Sigmoid colon (tissue), 7 donors: ENCODE measurements at regions of chr5 and their contacts with region 1.

Region 1: DNA sequence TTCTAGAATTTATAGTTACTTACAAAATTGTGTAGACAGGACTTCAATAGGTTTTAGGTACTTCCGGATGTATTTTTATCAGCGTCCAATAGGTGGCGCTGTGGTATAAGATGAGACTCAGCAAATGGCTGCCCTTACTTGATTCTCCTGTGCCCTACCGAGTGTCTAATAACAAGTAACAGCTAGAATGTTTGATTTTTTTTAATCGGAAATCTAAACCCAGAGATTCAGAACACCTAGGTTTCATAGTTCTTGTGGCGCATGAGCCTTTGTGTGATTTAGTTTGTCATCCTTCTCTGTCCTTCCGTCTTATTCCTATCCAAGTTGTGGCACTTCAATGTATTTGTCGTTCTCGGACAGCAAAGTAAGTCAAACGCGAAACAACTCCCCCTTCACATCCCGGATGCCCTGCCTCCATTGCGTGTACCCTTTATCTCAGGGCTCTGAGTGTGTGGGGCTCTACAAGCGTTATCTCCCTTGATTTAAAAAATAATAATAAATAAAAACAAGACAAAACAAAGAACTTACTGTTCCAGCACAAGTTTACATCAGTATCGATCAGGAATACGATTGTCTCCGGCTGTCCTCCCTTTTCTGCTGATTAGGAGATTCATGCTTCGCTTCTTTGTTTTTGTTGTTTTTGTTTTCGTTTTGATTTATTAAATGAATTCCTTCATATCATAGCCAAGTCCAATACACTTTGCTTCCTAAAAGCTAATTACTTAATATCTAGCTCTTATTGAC is 50.7 kb upstream of the SLC30A5 start:
- DNase-seq: peak; percentile 87
- H3K4me3 ChIP-seq: peak overlapping the region; percentile 28 to 52 (median 46)
- H3K27ac ChIP-seq: peak overlapping the region; percentile 59 to 78 (median 71)
- H3K4me1 ChIP-seq: peaks cover 0 to 8% (median 2%) of the 10 kb centered on the region in 4 donors
- H3K27me3 ChIP-seq: no peaks in the 10 kb centered on the region
- CTCF ChIP-seq: peak; percentile 57 to 85 (median 76)
- EP300 ChIP-seq: no peak
- POLR2A ChIP-seq: no peak

Region 2: DNA sequence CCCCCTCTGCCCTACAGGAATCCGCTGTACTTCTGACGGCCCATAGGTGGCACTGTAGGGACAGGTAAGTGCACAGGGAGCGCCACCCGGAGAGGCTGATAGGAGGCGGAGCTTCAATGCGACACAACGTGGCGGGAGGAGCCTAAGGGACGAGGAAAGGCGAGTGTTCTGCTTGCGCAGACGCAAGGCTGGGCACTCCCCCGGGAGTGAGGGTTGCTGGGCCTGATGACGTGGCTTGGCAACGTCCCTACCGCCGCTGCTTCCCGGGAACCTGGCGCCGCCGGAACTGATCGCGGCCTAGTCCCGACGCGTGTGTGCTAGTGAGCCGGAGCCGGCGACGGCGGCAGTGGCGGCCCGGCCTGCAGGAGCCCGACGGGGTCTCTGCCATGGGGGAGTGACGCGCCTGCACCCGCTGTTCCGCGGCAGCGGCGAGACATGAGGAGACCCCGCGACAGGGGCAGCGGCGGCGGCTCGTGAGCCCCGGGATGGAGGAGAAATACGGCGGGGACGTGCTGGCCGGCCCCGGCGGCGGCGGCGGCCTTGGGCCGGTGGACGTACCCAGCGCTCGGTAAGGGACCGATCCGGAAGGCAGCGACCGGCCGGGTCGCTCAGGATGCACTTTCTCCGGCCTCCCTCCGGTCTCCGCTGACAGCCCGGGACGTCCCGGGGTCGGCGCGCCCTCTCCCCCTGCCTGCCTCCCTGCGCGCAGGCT is 50.8 kb after region 1 on chr5 and contains the start of gene SLC30A5:
- intact Hi-C with region 1: loop called (anchors 1 kb)
- DNase-seq: peak; percentile 100
- H3K4me3 ChIP-seq: peak within 1 kb of the TSS; percentile 81 to 96 (median 88)
- H3K27ac ChIP-seq: peak within 1 kb of the TSS; percentile 90 to 98 (median 96)
- H3K4me1 ChIP-seq: peaks cover 0 to 26% (median 17%) of the 10 kb centered on the region in 4 donors
- H3K27me3 ChIP-seq: no peaks in the 10 kb centered on the region
- CTCF ChIP-seq: peak; percentile 82 to 93 (median 90)
- EP300 ChIP-seq: no peak
- POLR2A ChIP-seq: peak in 1 of 2 donors; percentile 75
- total RNA-seq, gene SLC30A5: 37.2 to 56.4 (median 44.4) TPM

Region 3: GRCh38 chr5:69369369-69370121 is 326.5 kb after region 1 on chr5 and contains the starts of genes AK6, RAD17 and TAF9:
- intact Hi-C with region 1: loop called (anchors 10 kb)
- DNase-seq: peak; percentile 94
- H3K4me3 ChIP-seq: peak within 1 kb of the TSS; percentile 67 to 87 (median 78)
- H3K27ac ChIP-seq: peak within 1 kb of the TSS; percentile 93 to 96 (median 94)
- H3K4me1 ChIP-seq: peaks cover 0 to 35% (median 22%) of the 10 kb centered on the region in 4 donors
- H3K27me3 ChIP-seq: no peaks in the 10 kb centered on the region
- CTCF ChIP-seq: no peak
- EP300 ChIP-seq: no peak
- POLR2A ChIP-seq: peak; percentile 41 to 66
- total RNA-seq, gene AK6: 20.7 to 34.1 (median 28.5) TPM
- total RNA-seq, gene RAD17: 18.3 to 25.3 (median 19.5) TPM
- total RNA-seq, gene TAF9: 33.2 to 52.8 (median 38.6) TPM